ENCODE measurements at regions of chr13 and their contacts with region 1.

Region 1: GRCh38 chr13:82298106-82298505 is 1584.2 kb downstream of the SLITRK1 start:
- DNase-seq: no peak
- H3K4me3 ChIP-seq: no peak overlapping the region
- H3K27ac ChIP-seq: no peak overlapping the region
- H3K4me1 ChIP-seq: no peaks in the 10 kb centered on the region
- H3K27me3 ChIP-seq: no peaks in the 10 kb centered on the region
- CTCF ChIP-seq: no peak
- EP300 ChIP-seq: no peak
- POLR2A ChIP-seq: no peak

Region 2: GRCh38 chr13:81770868-81771505 is 527.1 kb before region 1 on chr13:
- intact Hi-C with region 1: loop called in 1 of 4 experiments (anchors 5 kb)
- DNase-seq: no peak
- H3K4me3 ChIP-seq: no peak overlapping the region
- H3K27ac ChIP-seq: no peak overlapping the region
- H3K4me1 ChIP-seq: no peaks in the 10 kb centered on the region
- H3K27me3 ChIP-seq: no peaks in the 10 kb centered on the region
- CTCF ChIP-seq: no peak
- EP300 ChIP-seq: no peak
- POLR2A ChIP-seq: no peak

Region 3: GRCh38 chr13:83765796-83766195 is 1467.7 kb after region 1 on chr13:
- intact Hi-C with region 1: no loop called
- DNase-seq: no peak
- H3K4me3 ChIP-seq: no peak overlapping the region
- H3K27ac ChIP-seq: no peak overlapping the region
- H3K4me1 ChIP-seq: no peaks in the 10 kb centered on the region
- H3K27me3 ChIP-seq: no peaks in the 10 kb centered on the region
- CTCF ChIP-seq: no peak
- EP300 ChIP-seq: no peak
- POLR2A ChIP-seq: no peak

Measured in ovary (tissue), 10 donors.